Dendritic cell treated with granulocyte-macrophage colony-stimulating factor and Interleukin-4, amounts not matched to agents 40 ng/mL and 50 ng/mL, for 4 days (primary cell): ENCODE measurements at regions of chr1 and their contacts with region 1.

Region 1: DNA sequence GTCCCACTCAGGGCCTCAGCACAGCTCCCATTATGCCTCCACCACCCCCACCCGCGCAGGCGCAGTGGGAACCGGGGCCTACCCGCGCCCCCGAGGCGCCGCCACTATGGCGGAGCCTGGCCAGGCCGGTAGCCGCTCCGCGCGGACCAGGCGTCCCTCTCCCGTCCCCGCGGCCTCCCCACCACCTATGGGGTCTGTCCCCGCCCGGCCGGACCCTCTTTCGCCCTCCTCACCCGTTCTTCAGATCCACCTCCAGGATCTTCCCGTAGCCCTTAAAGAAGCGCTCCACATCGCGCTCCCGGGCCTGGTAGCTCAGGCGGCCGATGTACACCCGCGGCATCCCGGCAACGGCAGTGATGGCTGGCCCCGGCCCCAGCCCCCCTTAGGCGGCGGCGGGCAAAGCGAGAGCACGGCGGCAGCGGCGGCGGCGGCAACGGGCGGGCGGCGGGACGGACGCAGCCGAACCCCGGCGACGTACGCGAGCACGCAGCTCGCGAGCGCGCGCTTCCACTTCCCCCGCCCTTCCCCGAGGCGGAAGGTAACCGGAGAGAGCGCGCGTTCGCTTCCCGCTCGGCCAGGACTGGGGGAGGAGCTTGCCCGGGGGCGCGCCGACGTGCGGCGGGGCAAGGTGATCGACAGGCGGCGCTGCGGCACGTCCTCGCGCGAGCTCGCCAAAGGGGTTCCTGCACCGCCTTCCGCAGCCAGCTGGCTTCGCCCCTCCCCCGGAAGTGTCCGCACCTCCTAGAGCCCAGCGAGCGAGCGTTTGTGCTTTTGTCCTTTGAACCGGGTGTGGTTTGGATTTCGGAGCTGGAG is at the start of gene SRSF4:
- H3K4me3 Mint-ChIP-seq: peak within 1 kb of the TSS; percentile 96
- H3K27ac Mint-ChIP-seq: peak within 1 kb of the TSS; percentile 91
- H3K4me1 Mint-ChIP-seq: peaks cover 43% of the 10 kb centered on the region
- H3K27me3 Mint-ChIP-seq: no peaks in the 10 kb centered on the region

Region 2: DNA sequence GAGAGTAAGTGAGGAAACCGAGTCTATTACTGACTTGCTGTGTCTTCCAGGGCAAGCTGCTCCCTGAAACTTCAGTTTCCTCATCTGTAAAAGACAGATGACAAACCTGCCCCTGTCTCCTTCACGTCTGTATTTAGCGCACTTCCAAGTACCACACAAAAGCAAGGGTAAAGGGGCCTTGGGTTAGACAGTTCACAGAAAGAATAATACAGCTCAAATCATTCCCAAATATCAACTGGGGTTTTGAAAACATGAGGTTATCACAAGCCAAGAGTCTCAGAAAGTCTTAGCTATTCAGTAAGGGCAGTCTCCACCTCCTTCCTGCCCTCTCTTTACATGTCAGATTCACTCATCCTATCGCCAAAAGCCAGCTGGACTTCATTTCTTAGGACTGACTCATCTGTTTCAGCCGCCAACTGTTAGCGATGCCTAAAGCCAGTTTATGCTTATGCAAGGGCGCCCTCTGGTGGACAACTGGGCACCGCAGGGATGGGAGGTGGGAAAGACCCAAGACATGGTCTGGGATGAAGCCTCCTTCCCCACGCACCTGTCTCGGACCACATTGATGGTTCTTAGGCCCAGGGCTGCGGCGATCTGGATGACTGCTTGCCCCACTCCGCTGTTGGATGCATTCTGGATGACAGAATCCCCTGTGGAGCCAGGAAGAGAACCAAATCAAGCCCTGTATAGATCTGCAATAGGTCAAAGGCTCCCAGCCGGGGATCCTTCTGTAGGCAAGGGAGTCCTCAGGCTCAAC is 21.1 kb after region 1 on chr1:
- intact Hi-C with region 1: loop called (anchors 1 kb)
- H3K4me3 Mint-ChIP-seq: no peak overlapping the region
- H3K27ac Mint-ChIP-seq: peak overlapping the region; percentile 90
- H3K4me1 Mint-ChIP-seq: peaks cover 24% of the 10 kb centered on the region
- H3K27me3 Mint-ChIP-seq: no peaks in the 10 kb centered on the region